ENCODE measurements at regions of chr1 and their contacts with region 1.

Region 1: GRCh38 chr1:3624200-3625136 is at the start of gene TPRG1L:
- DNase-seq: peak; percentile 97 to 99 (median 98)
- ATAC-seq: peak; percentile 93
- H3K4me3 ChIP-seq: peak within 1 kb of the TSS; percentile 72 to 100
- H3K4me3 Mint-ChIP-seq: peak within 1 kb of the TSS; percentile 98
- H3K27ac ChIP-seq: peak within 1 kb of the TSS; percentile 61 to 89
- H3K27ac Mint-ChIP-seq: peak within 1 kb of the TSS; percentile 98
- H3K4me1 ChIP-seq: peaks cover 29% of the 10 kb centered on the region
- H3K4me1 Mint-ChIP-seq: peaks cover 40% of the 10 kb centered on the region
- H3K27me3 ChIP-seq: no peaks in the 10 kb centered on the region
- H3K27me3 Mint-ChIP-seq: no peaks in the 10 kb centered on the region
- CTCF ChIP-seq: no peak
- total RNA-seq, gene TPRG1L: 39.0 to 39.8 TPM

Region 2: GRCh38 chr1:3564921-3565827 is 59.3 kb before region 1 on chr1:
- CTCF ChIA-PET with region 1: interaction called, 59 read pairs
- POLR2A ChIA-PET with region 1: interaction called, 3 read pairs
- intact Hi-C with region 1: loop called in 1 of 2 experiments (anchors 1 kb)
- DNase-seq: peak in 8 of 9 experiments; percentile 11 to 68 (median 38)
- ATAC-seq: peak; percentile 71
- H3K4me3 ChIP-seq: no peak overlapping the region
- H3K4me3 Mint-ChIP-seq: no peak overlapping the region
- H3K27ac ChIP-seq: no peak overlapping the region
- H3K27ac Mint-ChIP-seq: no peak overlapping the region
- H3K4me1 ChIP-seq: no peaks in the 10 kb centered on the region
- H3K4me1 Mint-ChIP-seq: no peaks in the 10 kb centered on the region
- H3K27me3 ChIP-seq: no peaks in the 10 kb centered on the region
- H3K27me3 Mint-ChIP-seq: no peaks in the 10 kb centered on the region
- CTCF ChIP-seq: peak; percentile 82

Region 3: GRCh38 chr1:3611170-3612019 is 13.1 kb before region 1 on chr1 and contains the start of gene MEGF6:
- CTCF ChIA-PET with region 1: interaction called, 8 read pairs
- POLR2A ChIA-PET with region 1: no interaction called
- intact Hi-C with region 1: loop called in 1 of 2 experiments (anchors 1 kb)
- DNase-seq: peak in 8 of 9 experiments; percentile 45 to 78 (median 60)
- ATAC-seq: peak; percentile 85
- H3K4me3 ChIP-seq: peak within 1 kb of the TSS in 1 of 2 experiments; percentile 35
- H3K4me3 Mint-ChIP-seq: peak within 1 kb of the TSS; percentile 78
- H3K27ac ChIP-seq: no peak within 1 kb of the TSS
- H3K27ac Mint-ChIP-seq: no peak within 1 kb of the TSS
- H3K4me1 ChIP-seq: peaks cover 14% of the 10 kb centered on the region
- H3K4me1 Mint-ChIP-seq: peaks cover 7% of the 10 kb centered on the region
- H3K27me3 ChIP-seq: peaks cover 2 to 16% of the 10 kb centered on the region in 2 experiments
- H3K27me3 Mint-ChIP-seq: peaks cover 11% of the 10 kb centered on the region
- CTCF ChIP-seq: no peak
- total RNA-seq, gene MEGF6: 33.9 to 42.8 TPM

Region 4: GRCh38 chr1:3649342-3650247 is 25.1 kb after region 1 on chr1 and contains the start of gene WRAP73:
- CTCF ChIA-PET with region 1: interaction called, 3 read pairs
- POLR2A ChIA-PET with region 1: interaction called, 5 read pairs
- intact Hi-C with region 1: loop called (anchors 1 kb)
- DNase-seq: peak; percentile 74 to 95 (median 88)
- ATAC-seq: peak; percentile 97
- H3K4me3 ChIP-seq: peak within 1 kb of the TSS; percentile 71
- H3K4me3 Mint-ChIP-seq: peak within 1 kb of the TSS; percentile 78
- H3K27ac ChIP-seq: peak within 1 kb of the TSS in 1 of 2 experiments; percentile 50
- H3K27ac Mint-ChIP-seq: no peak within 1 kb of the TSS
- H3K4me1 ChIP-seq: peaks cover 38% of the 10 kb centered on the region
- H3K4me1 Mint-ChIP-seq: peaks cover 32% of the 10 kb centered on the region
- H3K27me3 ChIP-seq: peaks cover 22 to 24% of the 10 kb centered on the region in 2 experiments
- H3K27me3 Mint-ChIP-seq: peaks cover 23% of the 10 kb centered on the region
- CTCF ChIP-seq: no peak
- total RNA-seq, gene WRAP73: 23.7 to 27.5 TPM

Region 5: GRCh38 chr1:3668585-3669300 is 44.3 kb after region 1 on chr1:
- CTCF ChIA-PET with region 1: no interaction called
- POLR2A ChIA-PET with region 1: no interaction called
- intact Hi-C with region 1: no loop called
- DNase-seq: no peak
- ATAC-seq: no peak
- H3K4me3 ChIP-seq: no peak overlapping the region
- H3K4me3 Mint-ChIP-seq: no peak overlapping the region
- H3K27ac ChIP-seq: no peak overlapping the region
- H3K27ac Mint-ChIP-seq: no peak overlapping the region
- H3K4me1 ChIP-seq: no peaks in the 10 kb centered on the region
- H3K4me1 Mint-ChIP-seq: peaks cover 4% of the 10 kb centered on the region
- H3K27me3 ChIP-seq: peaks cover 0 to 2% of the 10 kb centered on the region in 2 experiments
- H3K27me3 Mint-ChIP-seq: peaks cover 12% of the 10 kb centered on the region
- CTCF ChIP-seq: no peak

Region 6: GRCh38 chr1:3746830-3747521 is 122.5 kb after region 1 on chr1:
- CTCF ChIA-PET with region 1: no interaction called
- POLR2A ChIA-PET with region 1: no interaction called
- intact Hi-C with region 1: loop called in 1 of 2 experiments (anchors 1 kb)
- DNase-seq: peak; percentile 66 to 90 (median 86)
- ATAC-seq: peak; percentile 97
- H3K4me3 ChIP-seq: peak overlapping the region; percentile 51 to 63
- H3K4me3 Mint-ChIP-seq: peak overlapping the region; percentile 81
- H3K27ac ChIP-seq: peak overlapping the region; percentile 46 to 47
- H3K27ac Mint-ChIP-seq: peak overlapping the region; percentile 73
- H3K4me1 ChIP-seq: peaks cover 10% of the 10 kb centered on the region
- H3K4me1 Mint-ChIP-seq: peaks cover 27% of the 10 kb centered on the region
- H3K27me3 ChIP-seq: no peaks in the 10 kb centered on the region
- H3K27me3 Mint-ChIP-seq: no peaks in the 10 kb centered on the region
- CTCF ChIP-seq: no peak

Region 7: DNA sequence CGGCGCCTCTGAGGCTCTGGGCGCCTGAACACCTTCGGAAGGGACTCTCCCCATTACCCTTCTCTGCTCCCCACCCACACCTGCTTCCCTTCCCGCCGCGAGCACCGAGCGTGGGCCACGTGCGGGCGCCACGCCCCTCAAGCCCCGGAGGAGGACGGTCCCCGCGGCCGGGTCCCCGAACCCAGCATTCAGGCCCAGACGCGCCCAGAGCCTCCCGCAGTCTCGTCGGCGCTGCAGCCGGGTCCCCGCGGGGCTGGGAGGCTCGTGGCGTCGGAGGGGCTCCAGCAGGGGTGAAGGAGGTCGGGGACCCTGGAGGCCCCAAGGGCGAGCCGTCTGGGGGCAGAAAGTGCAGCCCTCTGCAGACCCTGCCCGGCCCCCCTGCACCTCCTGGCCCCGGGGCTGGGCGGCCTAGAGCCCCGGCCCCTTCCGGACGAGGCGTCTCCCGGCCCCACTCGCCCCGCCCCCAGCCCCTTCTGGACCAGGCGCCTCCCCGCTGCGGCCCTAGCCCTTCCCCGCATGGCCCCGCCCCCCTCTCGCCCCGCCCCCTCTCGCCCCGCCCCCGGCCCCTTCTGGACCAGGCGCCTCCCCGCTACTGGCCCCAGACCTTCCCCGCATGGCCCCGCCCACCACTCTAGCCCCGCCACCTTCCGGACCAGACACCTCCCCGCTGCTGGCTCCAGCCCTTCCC is 147.7 kb after region 1 on chr1:
- CTCF ChIA-PET with region 1: no interaction called
- POLR2A ChIA-PET with region 1: no interaction called
- intact Hi-C with region 1: loop called in 1 of 2 experiments (anchors 10 kb)
- DNase-seq: peak; percentile 70 to 91 (median 87)
- ATAC-seq: peak; percentile 79
- H3K4me3 ChIP-seq: peak overlapping the region; percentile 39 to 71
- H3K4me3 Mint-ChIP-seq: peak overlapping the region; percentile 80
- H3K27ac ChIP-seq: no peak overlapping the region
- H3K27ac Mint-ChIP-seq: no peak overlapping the region
- H3K4me1 ChIP-seq: peaks cover 10% of the 10 kb centered on the region
- H3K4me1 Mint-ChIP-seq: peaks cover 10% of the 10 kb centered on the region
- H3K27me3 ChIP-seq: no peaks in the 10 kb centered on the region
- H3K27me3 Mint-ChIP-seq: peaks cover 3% of the 10 kb centered on the region
- CTCF ChIP-seq: no peak

Region 8: GRCh38 chr1:3796215-3797061 is 172.0 kb after region 1 on chr1 and contains the start of gene LRRC47:
- CTCF ChIA-PET with region 1: no interaction called
- POLR2A ChIA-PET with region 1: no interaction called
- intact Hi-C with region 1: loop called in 1 of 2 experiments (anchors 1 kb)
- DNase-seq: peak; percentile 86 to 95 (median 94)
- ATAC-seq: peak; percentile 99
- H3K4me3 ChIP-seq: peak within 1 kb of the TSS; percentile 51 to 75
- H3K4me3 Mint-ChIP-seq: peak within 1 kb of the TSS; percentile 93
- H3K27ac ChIP-seq: peak within 1 kb of the TSS; percentile 49 to 62
- H3K27ac Mint-ChIP-seq: peak within 1 kb of the TSS; percentile 94
- H3K4me1 ChIP-seq: peaks cover 31% of the 10 kb centered on the region
- H3K4me1 Mint-ChIP-seq: peaks cover 44% of the 10 kb centered on the region
- H3K27me3 ChIP-seq: no peaks in the 10 kb centered on the region
- H3K27me3 Mint-ChIP-seq: peaks cover 14% of the 10 kb centered on the region
- CTCF ChIP-seq: no peak
- total RNA-seq, gene LRRC47: 31.8 to 36.3 TPM